Panc1 (cell line): ENCODE measurements at regions of chr7 and their contacts with region 1.

Region 1: DNA sequence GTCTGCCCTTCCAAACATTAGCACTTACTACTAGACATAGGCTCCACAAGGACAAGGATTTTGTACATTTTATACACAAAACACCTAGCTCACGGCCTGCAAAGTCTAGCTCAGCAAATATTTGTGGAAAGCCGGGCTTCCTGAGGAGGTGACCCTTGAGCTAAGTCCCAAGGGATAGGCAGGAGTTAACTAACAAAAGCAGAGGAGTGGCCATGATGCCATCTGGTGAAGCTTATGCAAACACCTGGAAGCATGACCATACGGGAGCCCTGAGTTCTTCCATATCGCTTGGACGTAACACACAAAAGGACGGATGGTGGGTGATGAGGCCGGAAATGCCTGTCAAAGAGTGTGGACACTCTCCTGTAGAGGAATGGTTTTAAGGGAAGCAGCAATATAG is 25.9 kb upstream of the YAE1 start:
- DNase-seq: no peak
- ATAC-seq: no peak
- H3K4me3 ChIP-seq: no peak overlapping the region
- H3K27ac ChIP-seq: no peak overlapping the region
- H3K4me1 ChIP-seq: no peaks in the 10 kb centered on the region
- H3K27me3 ChIP-seq: no peaks in the 10 kb centered on the region
- CTCF ChIP-seq: no peak

Region 2: GRCh38 chr7:38775506-38776175 is 764.7 kb before region 1 on chr7:
- CTCF ChIA-PET with region 1: no interaction called
- POLR2A ChIA-PET with region 1: interaction called, 21 read pairs
- in situ Hi-C with region 1: no loop called
- intact Hi-C with region 1: no loop called
- DNase-seq: no peak
- ATAC-seq: no peak
- H3K4me3 ChIP-seq: no peak overlapping the region
- H3K27ac ChIP-seq: no peak overlapping the region
- H3K4me1 ChIP-seq: no peaks in the 10 kb centered on the region
- H3K27me3 ChIP-seq: no peaks in the 10 kb centered on the region
- CTCF ChIP-seq: no peak

Region 3: GRCh38 chr7:40047661-40048060 is 507.3 kb after region 1 on chr7:
- CTCF ChIA-PET with region 1: interaction called, 12 read pairs
- POLR2A ChIA-PET with region 1: no interaction called
- in situ Hi-C with region 1: no loop called
- intact Hi-C with region 1: no loop called
- DNase-seq: no peak
- ATAC-seq: no peak
- H3K4me3 ChIP-seq: no peak overlapping the region
- H3K27ac ChIP-seq: no peak overlapping the region
- H3K4me1 ChIP-seq: no peaks in the 10 kb centered on the region
- H3K27me3 ChIP-seq: no peaks in the 10 kb centered on the region
- CTCF ChIP-seq: no peak